Left cardiac atrium (tissue), 4 donors: ENCODE measurements at regions of chr6 and their contacts with region 1.

Region 1: DNA sequence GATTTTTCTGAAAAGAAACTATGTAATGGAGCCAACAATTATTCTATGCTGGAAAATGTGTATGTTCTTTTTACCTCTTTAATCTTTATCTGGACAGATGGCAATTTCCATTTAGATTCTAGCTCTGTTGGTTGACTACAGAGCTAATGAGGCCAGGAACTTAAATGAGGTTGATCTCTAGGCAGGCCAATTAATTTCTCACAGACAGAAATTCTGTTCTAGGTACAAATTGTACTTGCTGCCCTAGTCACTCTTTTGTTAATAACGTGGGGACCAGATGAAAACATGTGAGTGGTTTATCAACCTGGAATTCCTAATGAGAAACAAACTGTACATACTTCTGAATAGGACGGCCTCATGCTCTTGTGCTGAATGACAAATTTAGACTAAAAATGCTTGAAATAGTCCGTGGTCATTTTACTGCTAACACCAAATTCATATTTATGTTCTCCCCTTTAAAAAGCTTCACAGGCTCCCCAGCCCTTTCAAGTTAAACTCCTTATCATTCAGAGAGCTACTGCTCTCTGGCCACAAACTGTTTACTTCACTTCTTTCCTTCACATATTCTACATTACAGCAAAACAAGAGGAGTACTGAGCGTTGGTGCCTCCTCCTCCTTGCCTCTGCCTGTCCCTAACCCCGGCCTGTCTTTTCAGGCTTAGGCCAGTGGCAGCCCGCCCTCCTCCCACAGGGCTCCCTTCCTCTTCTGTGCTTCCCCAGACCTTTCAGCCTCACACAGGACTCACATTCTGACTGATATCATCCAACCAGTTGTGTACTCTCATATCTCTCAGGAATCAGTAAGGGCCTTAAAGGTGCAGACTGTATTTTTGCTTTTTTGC is 41.4 kb downstream of the DTNBP1 start:
- DNase-seq: peak; percentile 47
- ATAC-seq: peak; percentile 76 to 90

Region 2: GRCh38 chr6:14129575-14129974 is 1491.8 kb before region 1 on chr6:
- intact Hi-C with region 1: loop called (anchors 5 to 10 kb)
- DNase-seq: peak; percentile 46
- ATAC-seq: peak; percentile 88 to 95

Region 3: GRCh38 chr6:15504581-15505350 is 116.7 kb before region 1 on chr6:
- intact Hi-C with region 1: loop called (anchors 5 to 10 kb)
- DNase-seq: peak; percentile 77
- ATAC-seq: peak; percentile 68 to 76

Region 4: GRCh38 chr6:15518057-15518456 is 103.4 kb before region 1 on chr6:
- intact Hi-C with region 1: loop called in 1 of 2 experiments (anchors 5 kb)
- DNase-seq: no peak
- ATAC-seq: no peak